ENCODE measurements at regions of chr20 and their contacts with region 1.

Region 1: GRCh38 chr20:32387252-32387651 is 29.1 kb downstream of the ASXL1 start:
- DNase-seq: no peak
- ATAC-seq: no peak
- H3K4me3 ChIP-seq: no peak overlapping the region
- H3K27ac ChIP-seq: no peak overlapping the region
- H3K4me1 ChIP-seq: peaks cover 14% of the 10 kb centered on the region
- H3K27me3 ChIP-seq: no peaks in the 10 kb centered on the region
- CTCF ChIP-seq: no peak

Region 2: GRCh38 chr20:32216179-32217142 is 170.8 kb before region 1 on chr20:
- CTCF ChIA-PET with region 1: no interaction called
- POLR2A ChIA-PET with region 1: interaction called, 13 read pairs
- in situ Hi-C with region 1: no loop called
- intact Hi-C with region 1: no loop called
- DNase-seq: no peak
- ATAC-seq: no peak
- H3K4me3 ChIP-seq: no peak overlapping the region
- H3K27ac ChIP-seq: no peak overlapping the region
- H3K4me1 ChIP-seq: no peaks in the 10 kb centered on the region
- H3K27me3 ChIP-seq: no peaks in the 10 kb centered on the region
- CTCF ChIP-seq: no peak

Region 3: GRCh38 chr20:32368925-32369324 is 18.3 kb before region 1 on chr20:
- CTCF ChIA-PET with region 1: no interaction called
- POLR2A ChIA-PET with region 1: interaction called, 14 read pairs
- in situ Hi-C with region 1: no loop called
- intact Hi-C with region 1: no loop called
- DNase-seq: no peak
- ATAC-seq: no peak
- H3K4me3 ChIP-seq: no peak overlapping the region
- H3K27ac ChIP-seq: no peak overlapping the region
- H3K4me1 ChIP-seq: peaks cover 25% of the 10 kb centered on the region
- H3K27me3 ChIP-seq: no peaks in the 10 kb centered on the region
- CTCF ChIP-seq: no peak

Region 4: GRCh38 chr20:32411955-32412706 is 24.9 kb after region 1 on chr20:
- CTCF ChIA-PET with region 1: no interaction called
- POLR2A ChIA-PET with region 1: no interaction called
- in situ Hi-C with region 1: no loop called
- intact Hi-C with region 1: no loop called
- DNase-seq: no peak
- ATAC-seq: no peak
- H3K4me3 ChIP-seq: no peak overlapping the region
- H3K27ac ChIP-seq: no peak overlapping the region
- H3K4me1 ChIP-seq: 0 out of 2 replicates have a peak, but pooled peaks cover 7% of the 10 kb centered on the region
- H3K27me3 ChIP-seq: no peaks in the 10 kb centered on the region
- CTCF ChIP-seq: no peak

Measured in Panc1 (cell line).